Caco-2 (cell line): ENCODE measurements at regions of chr10 and their contacts with region 1.

Region 1: DNA sequence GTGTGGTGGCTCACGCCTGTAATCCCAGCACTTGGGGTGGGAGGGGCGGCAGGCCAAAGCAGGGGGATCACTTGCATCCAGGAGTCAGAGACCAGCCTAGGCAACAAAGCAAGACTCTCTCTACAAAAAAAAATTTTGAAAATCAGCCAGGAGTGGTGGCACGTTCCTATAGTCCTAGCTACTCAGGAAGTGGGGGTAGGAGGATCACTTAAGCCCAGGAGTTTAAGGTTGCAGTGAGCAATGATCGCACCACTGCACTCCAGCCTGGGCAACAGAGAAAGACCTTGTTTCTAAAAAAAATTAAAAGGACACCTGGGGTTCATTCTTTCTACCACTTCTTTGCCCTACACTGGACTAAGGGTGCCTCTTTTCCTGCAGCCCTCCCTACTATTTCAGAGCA is 15.1 kb downstream of the WAPL start:
- DNase-seq: no peak
- H3K4me3 ChIP-seq: no peak overlapping the region
- H3K4me3 Mint-ChIP-seq: no peak overlapping the region
- H3K27ac Mint-ChIP-seq: no peak overlapping the region
- H3K4me1 ChIP-seq: no peaks in the 10 kb centered on the region
- H3K4me1 Mint-ChIP-seq: peaks cover under 1% of the 10 kb centered on the region
- H3K27me3 ChIP-seq: no peaks in the 10 kb centered on the region
- H3K27me3 Mint-ChIP-seq: no peaks in the 10 kb centered on the region
- CTCF ChIP-seq: no peak

Region 2: GRCh38 chr10:85682601-85683000 is 823.9 kb before region 1 on chr10:
- CTCF ChIA-PET with region 1: no interaction called
- POLR2A ChIA-PET with region 1: no interaction called
- intact Hi-C with region 1: no loop called
- DNase-seq: no peak
- H3K4me3 ChIP-seq: no peak overlapping the region
- H3K4me3 Mint-ChIP-seq: no peak overlapping the region
- H3K27ac Mint-ChIP-seq: no peak overlapping the region
- H3K4me1 ChIP-seq: no peaks in the 10 kb centered on the region
- H3K4me1 Mint-ChIP-seq: no peaks in the 10 kb centered on the region
- H3K27me3 ChIP-seq: no peaks in the 10 kb centered on the region
- H3K27me3 Mint-ChIP-seq: no peaks in the 10 kb centered on the region
- CTCF ChIP-seq: no peak

Region 3: GRCh38 chr10:86481761-86482160 is 24.7 kb before region 1 on chr10:
- CTCF ChIA-PET with region 1: no interaction called
- POLR2A ChIA-PET with region 1: no interaction called
- intact Hi-C with region 1: no loop called
- DNase-seq: no peak
- H3K4me3 ChIP-seq: no peak overlapping the region
- H3K4me3 Mint-ChIP-seq: no peak overlapping the region
- H3K27ac Mint-ChIP-seq: no peak overlapping the region
- H3K4me1 ChIP-seq: no peaks in the 10 kb centered on the region
- H3K4me1 Mint-ChIP-seq: no peaks in the 10 kb centered on the region
- H3K27me3 ChIP-seq: no peaks in the 10 kb centered on the region
- H3K27me3 Mint-ChIP-seq: no peaks in the 10 kb centered on the region
- CTCF ChIP-seq: no peak

Region 4: DNA sequence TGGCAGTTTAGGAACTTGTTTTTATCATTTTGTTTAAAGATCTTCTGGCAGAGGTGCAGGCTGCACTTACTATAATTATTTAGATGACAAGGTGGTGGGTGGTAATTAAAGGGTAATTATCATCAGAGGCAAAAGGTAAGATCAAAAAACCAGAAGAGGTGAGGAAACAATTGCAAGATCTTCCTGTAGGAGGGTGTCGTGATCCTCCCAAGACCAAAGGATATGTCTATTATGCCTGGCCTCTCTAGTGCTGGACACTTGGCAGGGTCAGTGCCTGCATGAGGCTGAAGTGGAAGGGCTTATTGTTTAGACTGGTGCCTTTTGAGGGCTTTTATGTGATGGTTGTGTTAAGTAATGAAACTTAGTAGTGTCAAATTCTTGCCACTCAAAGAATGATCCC is 16.8 kb after region 1 on chr10:
- CTCF ChIA-PET with region 1: no interaction called
- POLR2A ChIA-PET with region 1: no interaction called
- intact Hi-C with region 1: no loop called
- DNase-seq: no peak
- H3K4me3 ChIP-seq: no peak overlapping the region
- H3K4me3 Mint-ChIP-seq: peak overlapping the region; percentile 98
- H3K27ac Mint-ChIP-seq: no peak overlapping the region
- H3K4me1 ChIP-seq: peaks cover 16% of the 10 kb centered on the region
- H3K4me1 Mint-ChIP-seq: peaks cover 16% of the 10 kb centered on the region
- H3K27me3 ChIP-seq: no peaks in the 10 kb centered on the region
- H3K27me3 Mint-ChIP-seq: no peaks in the 10 kb centered on the region
- CTCF ChIP-seq: no peak

Region 5: DNA sequence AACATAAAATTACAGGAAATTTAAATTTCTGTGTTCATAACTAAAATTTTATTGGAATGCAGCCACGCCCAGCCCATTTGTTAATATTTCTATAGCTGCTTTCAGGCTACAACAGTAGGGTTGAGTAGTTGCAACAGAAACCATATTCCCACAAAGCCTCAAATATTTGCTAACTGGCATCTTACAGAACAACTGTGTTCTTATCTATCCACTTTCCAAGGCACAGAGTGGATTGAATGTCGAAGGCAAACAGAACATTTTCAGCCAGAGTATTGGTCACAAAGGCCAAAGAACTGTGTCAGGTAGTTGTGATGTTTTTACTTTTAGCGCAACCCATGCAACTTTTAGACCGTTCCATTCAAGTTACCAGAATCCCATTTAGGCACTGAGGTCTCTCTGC is 96.8 kb after region 1 on chr10:
- CTCF ChIA-PET with region 1: no interaction called
- POLR2A ChIA-PET with region 1: no interaction called
- intact Hi-C with region 1: no loop called
- DNase-seq: peak in 1 of 2 experiments; percentile 31
- H3K4me3 ChIP-seq: no peak overlapping the region
- H3K4me3 Mint-ChIP-seq: no peak overlapping the region
- H3K27ac Mint-ChIP-seq: no peak overlapping the region
- H3K4me1 ChIP-seq: peaks cover 11% of the 10 kb centered on the region
- H3K4me1 Mint-ChIP-seq: peaks cover 13% of the 10 kb centered on the region
- H3K27me3 ChIP-seq: no peaks in the 10 kb centered on the region
- H3K27me3 Mint-ChIP-seq: no peaks in the 10 kb centered on the region
- CTCF ChIP-seq: no peak

Region 6: DNA sequence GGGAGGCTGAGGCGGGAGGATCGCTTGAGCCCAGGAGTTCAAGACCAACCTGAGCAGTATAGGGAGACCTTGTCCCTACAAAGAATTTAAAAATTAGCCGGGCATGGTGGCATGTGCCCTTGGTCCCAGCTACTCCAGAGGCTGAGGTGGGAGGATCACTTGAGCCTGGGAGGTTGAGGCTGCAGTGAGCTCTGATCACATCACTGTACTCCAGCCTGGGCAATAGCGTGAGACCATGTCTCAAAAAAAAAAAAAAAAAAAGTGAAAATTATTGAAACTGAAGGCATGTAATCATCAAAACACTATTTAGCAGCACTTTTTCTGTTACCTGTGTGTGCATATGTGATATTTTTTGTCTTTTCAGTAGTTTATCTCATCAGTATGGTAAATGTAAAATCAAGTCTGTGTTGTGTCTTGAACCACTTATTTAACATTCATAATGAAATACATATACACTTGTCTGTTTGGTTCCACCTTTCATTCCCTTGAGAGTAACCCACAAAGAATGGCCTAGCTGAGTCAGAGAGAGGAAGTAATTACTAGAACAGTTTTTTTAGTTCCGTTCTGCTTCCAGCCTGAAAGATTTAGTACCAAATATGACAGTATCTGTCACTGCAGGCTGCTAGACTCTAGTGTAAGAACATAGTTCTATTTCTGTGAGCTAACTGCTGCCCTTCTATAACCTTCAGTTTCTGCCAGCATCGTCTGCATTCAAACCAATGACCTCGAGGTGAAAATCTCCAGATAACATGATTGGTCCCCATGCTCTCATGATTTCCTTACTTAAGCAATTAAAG is 382.3 kb after region 1 on chr10:
- CTCF ChIA-PET with region 1: interaction called, 12 read pairs
- POLR2A ChIA-PET with region 1: no interaction called
- intact Hi-C with region 1: no loop called
- DNase-seq: no peak
- H3K4me3 ChIP-seq: no peak overlapping the region
- H3K4me3 Mint-ChIP-seq: no peak overlapping the region
- H3K27ac Mint-ChIP-seq: no peak overlapping the region
- H3K4me1 ChIP-seq: no peaks in the 10 kb centered on the region
- H3K4me1 Mint-ChIP-seq: no peaks in the 10 kb centered on the region
- H3K27me3 ChIP-seq: no peaks in the 10 kb centered on the region
- H3K27me3 Mint-ChIP-seq: no peaks in the 10 kb centered on the region
- CTCF ChIP-seq: no peak